ENCODE measurements at regions of chr9 and their contacts with region 1.

Region 1: GRCh38 chr9:130701056-130702022 is 7.8 kb downstream of the EXOSC2 start:
- DNase-seq: peak; percentile 44 to 80 (median 72)
- ATAC-seq: peak; percentile 95
- H3K4me3 ChIP-seq: no peak overlapping the region
- H3K4me3 Mint-ChIP-seq: no peak overlapping the region
- H3K27ac ChIP-seq: no peak overlapping the region
- H3K27ac Mint-ChIP-seq: no peak overlapping the region
- H3K4me1 ChIP-seq: no peaks in the 10 kb centered on the region
- H3K4me1 Mint-ChIP-seq: peaks cover 18% of the 10 kb centered on the region
- H3K27me3 ChIP-seq: no peaks in the 10 kb centered on the region
- H3K27me3 Mint-ChIP-seq: no peaks in the 10 kb centered on the region
- CTCF ChIP-seq: peak; percentile 87

Region 2: DNA sequence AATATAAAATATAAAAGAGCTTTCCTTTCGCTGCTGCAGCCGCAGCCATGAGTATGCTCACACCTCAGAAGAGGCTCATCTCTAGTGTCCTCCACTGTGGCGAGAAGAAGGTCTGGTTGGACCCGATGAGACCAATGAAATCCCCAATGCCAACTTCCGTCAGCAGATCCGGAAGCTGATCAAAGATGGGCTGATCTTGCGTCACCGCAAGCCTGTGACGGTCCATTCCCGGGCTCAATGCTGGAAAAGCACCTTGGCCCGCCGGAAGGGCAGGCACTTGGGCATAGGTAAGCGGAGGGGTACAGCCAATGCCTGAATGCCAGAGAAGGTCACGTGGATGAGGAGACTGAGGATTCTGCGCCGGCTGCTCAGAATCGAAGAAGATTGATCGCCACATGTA is 49.6 kb before region 1 on chr9:
- CTCF ChIA-PET with region 1: no interaction called
- POLR2A ChIA-PET with region 1: no interaction called
- intact Hi-C with region 1: no loop called
- DNase-seq: no peak
- ATAC-seq: no peak
- H3K4me3 ChIP-seq: no peak overlapping the region
- H3K4me3 Mint-ChIP-seq: no peak overlapping the region
- H3K27ac ChIP-seq: no peak overlapping the region
- H3K27ac Mint-ChIP-seq: no peak overlapping the region
- H3K4me1 ChIP-seq: no peaks in the 10 kb centered on the region
- H3K4me1 Mint-ChIP-seq: no peaks in the 10 kb centered on the region
- H3K27me3 ChIP-seq: no peaks in the 10 kb centered on the region
- H3K27me3 Mint-ChIP-seq: peaks cover 14% of the 10 kb centered on the region
- CTCF ChIP-seq: no peak

Region 3: DNA sequence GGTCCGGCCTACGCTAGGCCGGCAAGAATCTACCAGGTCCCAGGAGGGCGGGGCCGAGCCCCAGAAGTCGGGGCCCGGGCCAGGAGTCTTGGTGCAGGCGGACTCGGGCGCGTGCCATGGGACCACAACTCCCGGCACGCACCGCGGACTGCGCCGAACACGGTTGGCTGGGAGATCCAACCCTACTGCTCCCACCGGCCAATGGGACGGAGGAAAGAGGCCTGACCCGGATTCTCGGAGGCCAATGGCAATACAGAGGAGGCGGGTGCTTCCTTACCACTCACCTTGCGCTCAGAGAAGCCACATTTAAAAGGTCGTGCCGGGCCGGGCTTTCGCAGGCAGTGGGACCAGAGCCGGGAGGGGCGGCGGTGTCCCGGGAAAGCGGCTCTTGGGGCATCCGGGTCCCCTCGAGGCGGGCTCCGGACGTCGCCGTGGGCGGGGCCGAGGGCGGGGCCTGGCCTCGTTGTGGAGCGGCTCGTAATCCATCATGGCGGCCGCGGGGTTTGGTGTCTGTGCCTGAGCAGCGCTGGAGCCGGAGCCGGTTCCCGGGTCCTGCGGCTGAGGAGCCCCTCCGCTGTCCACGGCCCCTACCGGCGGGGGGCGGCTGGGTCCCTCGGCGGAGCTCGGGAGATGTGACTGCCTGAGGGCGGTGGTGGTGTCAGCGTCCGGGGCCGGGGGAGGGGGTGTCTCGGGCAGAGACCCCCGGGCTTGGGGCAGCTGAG is 11.4 kb after region 1 on chr9:
- CTCF ChIA-PET with region 1: interaction called, 24 read pairs
- POLR2A ChIA-PET with region 1: interaction called, 9 read pairs
- intact Hi-C with region 1: no loop called
- DNase-seq: peak; percentile 87 to 97 (median 95)
- ATAC-seq: peak; percentile 96
- H3K4me3 ChIP-seq: peak overlapping the region; percentile 81 to 92
- H3K4me3 Mint-ChIP-seq: peak overlapping the region; percentile 92
- H3K27ac ChIP-seq: peak overlapping the region; percentile 87 to 97
- H3K27ac Mint-ChIP-seq: peak overlapping the region; percentile 94
- H3K4me1 ChIP-seq: peaks cover 31% of the 10 kb centered on the region
- H3K4me1 Mint-ChIP-seq: peaks cover 36% of the 10 kb centered on the region
- H3K27me3 ChIP-seq: no peaks in the 10 kb centered on the region
- H3K27me3 Mint-ChIP-seq: no peaks in the 10 kb centered on the region
- CTCF ChIP-seq: no peak